ENCODE measurements at regions of chr1 and their contacts with region 1.

Region 1: GRCh38 chr1:26529655-26530409 is at the start of gene RPS6KA1:
- DNase-seq: peak; percentile 69
- ATAC-seq: peak; percentile 60
- H3K4me3 ChIP-seq: peak within 1 kb of the TSS; percentile 78
- H3K27ac ChIP-seq: peak within 1 kb of the TSS; percentile 70
- H3K4me1 ChIP-seq: peaks cover 21% of the 10 kb centered on the region
- H3K27me3 ChIP-seq: no peaks in the 10 kb centered on the region
- CTCF ChIP-seq: no peak
- total RNA-seq, gene RPS6KA1: 98.2 and 111 TPM in 2 replicates

Region 2: GRCh38 chr1:26500488-26501175 is 29.2 kb before region 1 on chr1:
- CTCF ChIA-PET with region 1: interaction called, 22 read pairs
- POLR2A ChIA-PET with region 1: interaction called, 6 read pairs
- intact Hi-C with region 1: loop called (anchors 1 kb)
- DNase-seq: peak; percentile 76
- ATAC-seq: peak; percentile 79
- H3K4me3 ChIP-seq: peak overlapping the region; percentile 73
- H3K27ac ChIP-seq: peak overlapping the region; percentile 93
- H3K4me1 ChIP-seq: peaks cover 19% of the 10 kb centered on the region
- H3K27me3 ChIP-seq: no peaks in the 10 kb centered on the region
- CTCF ChIP-seq: peak; percentile 12; the same call in 1 of the 2 replicates

Region 3: DNA sequence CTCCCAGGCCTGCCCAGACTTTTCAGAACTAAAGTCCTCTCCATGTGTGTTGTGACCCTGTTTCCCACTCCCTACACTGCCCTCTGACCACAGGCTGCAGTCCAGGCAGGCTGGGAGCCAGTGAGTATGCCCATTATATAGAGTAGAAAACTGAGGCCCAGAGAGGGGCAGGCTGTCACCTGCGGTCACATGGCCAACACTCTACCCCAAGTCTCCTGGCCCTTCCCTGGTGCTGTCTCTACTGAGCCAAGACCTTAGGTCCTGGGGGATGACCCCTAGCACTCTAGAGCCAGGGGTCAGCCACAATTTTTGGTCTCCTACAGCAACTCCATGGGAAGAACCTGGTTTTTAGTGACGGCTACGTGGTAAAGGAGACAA is 30.6 kb after region 1 on chr1:
- CTCF ChIA-PET with region 1: no interaction called
- POLR2A ChIA-PET with region 1: no interaction called
- intact Hi-C with region 1: no loop called
- DNase-seq: no peak
- ATAC-seq: no peak
- H3K4me3 ChIP-seq: no peak overlapping the region
- H3K27ac ChIP-seq: no peak overlapping the region
- H3K4me1 ChIP-seq: no peaks in the 10 kb centered on the region; the same call in 1 of the 2 replicates
- H3K27me3 ChIP-seq: no peaks in the 10 kb centered on the region
- CTCF ChIP-seq: no peak

Region 4: DNA sequence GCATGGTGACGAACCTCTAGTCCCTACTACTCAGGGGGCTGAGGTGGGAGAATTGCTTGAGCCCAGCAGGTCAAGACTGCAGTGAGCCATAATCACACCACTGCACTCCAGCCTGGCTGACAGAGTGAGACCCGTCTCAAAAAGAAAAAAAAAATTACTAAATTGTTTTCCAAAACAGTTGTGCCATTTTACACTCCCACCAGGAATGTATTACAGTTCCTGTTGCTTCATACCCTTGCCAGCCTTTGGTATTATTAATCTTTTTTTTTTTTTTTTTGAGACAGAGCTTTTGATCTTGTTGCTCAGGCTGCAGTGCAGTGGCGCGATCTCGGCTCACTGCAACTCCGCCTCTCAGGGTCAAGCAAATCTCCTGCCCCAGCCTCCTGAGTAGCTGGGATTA is 55.6 kb after region 1 on chr1:
- CTCF ChIA-PET with region 1: no interaction called
- POLR2A ChIA-PET with region 1: interaction called, 18 read pairs
- intact Hi-C with region 1: no loop called
- DNase-seq: no peak
- ATAC-seq: no peak
- H3K4me3 ChIP-seq: no peak overlapping the region
- H3K27ac ChIP-seq: no peak overlapping the region
- H3K4me1 ChIP-seq: peaks cover 23% of the 10 kb centered on the region
- H3K27me3 ChIP-seq: no peaks in the 10 kb centered on the region
- CTCF ChIP-seq: no peak